Activated naive CD8-positive, alpha-beta T cell treated with anti-CD3 and anti-CD28 coated beads, Interleukin-2, amount 10 ng/mL, durations not matched to agents 7 days and 5 days (primary cell): ENCODE measurements at regions of chr2 and their contacts with region 1.

Region 1: DNA sequence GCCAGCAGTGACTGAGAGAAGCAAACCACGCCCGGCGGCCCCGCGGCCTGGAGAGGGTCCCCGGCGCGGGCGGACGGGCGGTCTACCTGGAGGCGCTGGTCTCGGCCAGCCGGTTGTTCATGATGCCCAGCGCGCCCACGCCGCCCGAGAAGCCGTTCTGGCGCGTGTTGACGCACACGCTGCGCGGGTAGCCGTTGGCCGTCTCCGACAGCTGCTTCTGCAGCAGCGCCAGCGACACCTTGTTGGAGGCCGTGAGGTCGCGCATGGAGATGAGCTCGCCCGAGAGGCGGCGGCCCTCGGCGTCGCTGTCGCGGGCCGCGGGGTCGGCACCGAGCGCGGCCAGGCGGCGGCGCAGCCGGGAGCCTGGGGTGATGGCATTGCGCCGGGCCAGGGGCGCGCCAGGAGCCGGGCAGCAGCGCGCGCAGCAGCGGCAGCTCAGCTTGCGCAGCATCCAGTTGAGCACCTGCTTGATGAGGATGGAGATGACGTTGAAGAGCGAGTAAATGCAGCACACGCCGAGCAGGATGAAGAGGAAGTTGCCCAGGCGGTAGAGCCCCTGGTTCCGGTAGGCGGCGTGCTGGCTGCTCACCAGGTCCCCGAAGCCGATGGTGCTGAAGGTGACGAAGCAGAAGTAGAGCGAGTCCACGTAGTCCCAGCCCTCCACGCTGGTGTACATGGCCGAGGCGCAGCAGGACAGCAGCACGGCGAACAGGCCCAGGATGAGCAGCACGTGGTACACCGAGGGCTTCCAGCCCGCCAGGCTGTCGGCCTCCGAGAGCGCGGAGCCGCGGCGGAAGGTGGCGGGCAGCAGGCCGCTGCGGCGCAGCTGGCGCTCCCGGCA is 118.1 kb downstream of the MSH2 start:
- DNase-seq: peak; percentile 83
- ATAC-seq: peak; percentile 89
- H3K4me3 Mint-ChIP-seq: peak overlapping the region; percentile 92
- H3K27ac Mint-ChIP-seq: peak overlapping the region; percentile 96
- H3K4me1 Mint-ChIP-seq: peaks cover 30% of the 10 kb centered on the region
- H3K27me3 Mint-ChIP-seq: peaks cover 2% of the 10 kb centered on the region

Region 2: GRCh38 chr2:47457268-47457667 is 63.8 kb before region 1 on chr2:
- POLR2A ChIA-PET with region 1: no interaction called
- DNase-seq: no peak
- ATAC-seq: no peak
- H3K4me3 Mint-ChIP-seq: no peak overlapping the region
- H3K27ac Mint-ChIP-seq: no peak overlapping the region
- H3K4me1 Mint-ChIP-seq: peaks cover 18% of the 10 kb centered on the region
- H3K27me3 Mint-ChIP-seq: no peaks in the 10 kb centered on the region

Region 3: GRCh38 chr2:47501374-47502200 is 19.5 kb before region 1 on chr2:
- POLR2A ChIA-PET with region 1: interaction called, 22 read pairs
- DNase-seq: no peak
- ATAC-seq: peak; percentile 72
- H3K4me3 Mint-ChIP-seq: peak overlapping the region; percentile 66
- H3K27ac Mint-ChIP-seq: peak overlapping the region; percentile 92
- H3K4me1 Mint-ChIP-seq: peaks cover 19% of the 10 kb centered on the region
- H3K27me3 Mint-ChIP-seq: no peaks in the 10 kb centered on the region